ENCODE measurements at regions of chr11 and their contacts with region 1.

Region 1: GRCh38 chr11:115504276-115505158 is at the start of gene CADM1:
- DNase-seq: peak; percentile 96
- H3K4me3 ChIP-seq: peak within 1 kb of the TSS; percentile 84 to 95
- H3K27ac ChIP-seq: peak within 1 kb of the TSS; percentile 48 to 98; a peak in 3 of 4 replicates
- H3K4me1 ChIP-seq: peaks cover 3 to 22% of the 10 kb centered on the region in 2 experiments; a peak in 2 of 4 replicates
- H3K27me3 ChIP-seq: peaks cover 12% of the 10 kb centered on the region; the same call in 1 of the 2 replicates
- CTCF ChIP-seq: peak; percentile 56
- EP300 ChIP-seq: no peak
- RAD21 ChIP-seq: peak; percentile 57
- polyA plus RNA-seq, gene CADM1: 7.9 and 11.4 TPM in 2 replicates

Region 2: GRCh38 chr11:115324581-115325432 is 179.7 kb before region 1 on chr11:
- CTCF ChIA-PET with region 1: interaction called, 28 read pairs
- POLR2A ChIA-PET with region 1: interaction called, 3 read pairs
- DNase-seq: peak; percentile 33
- H3K4me3 ChIP-seq: no peak overlapping the region; a peak in 1 of 4 replicates
- H3K27ac ChIP-seq: peak overlapping the region in 1 of 2 experiments; percentile 39; a peak in 1 of 4 replicates
- H3K4me1 ChIP-seq: peaks cover 0 to 14% of the 10 kb centered on the region in 2 experiments; a peak in 2 of 4 replicates
- H3K27me3 ChIP-seq: no peaks in the 10 kb centered on the region
- CTCF ChIP-seq: peak; percentile 82
- EP300 ChIP-seq: no peak
- RAD21 ChIP-seq: peak; percentile 90

Region 3: GRCh38 chr11:115334932-115335788 is 169.4 kb before region 1 on chr11:
- CTCF ChIA-PET with region 1: interaction called, 16 read pairs
- POLR2A ChIA-PET with region 1: interaction called, 5 read pairs
- DNase-seq: peak; percentile 21
- H3K4me3 ChIP-seq: no peak overlapping the region
- H3K27ac ChIP-seq: no peak overlapping the region
- H3K4me1 ChIP-seq: peaks cover 0 to 6% of the 10 kb centered on the region in 2 experiments; a peak in 2 of 4 replicates
- H3K27me3 ChIP-seq: no peaks in the 10 kb centered on the region
- CTCF ChIP-seq: peak; percentile 85
- EP300 ChIP-seq: no peak
- RAD21 ChIP-seq: peak; percentile 83

Region 4: DNA sequence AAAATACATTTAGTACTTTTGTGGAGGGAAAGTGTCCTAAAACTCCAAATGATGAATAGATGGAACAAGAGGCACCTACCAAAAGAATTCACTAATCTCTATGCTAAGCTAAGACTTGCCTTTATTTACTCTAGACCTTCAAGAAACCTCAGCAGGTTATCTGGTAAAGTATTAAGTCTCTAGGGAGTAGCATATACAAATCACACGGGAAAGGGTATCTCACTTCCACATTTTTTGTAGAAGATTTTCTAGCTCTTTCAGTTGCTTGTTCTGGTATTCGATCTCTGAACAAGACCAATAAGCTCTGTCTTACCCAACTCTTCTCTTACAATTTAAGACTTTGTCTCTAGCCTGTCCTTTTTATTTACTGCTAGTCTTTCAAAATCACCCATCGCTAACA is 17.8 kb after region 1 on chr11:
- CTCF ChIA-PET with region 1: interaction called, 10 read pairs
- POLR2A ChIA-PET with region 1: no interaction called
- DNase-seq: no peak
- H3K4me3 ChIP-seq: no peak overlapping the region
- H3K27ac ChIP-seq: no peak overlapping the region
- H3K4me1 ChIP-seq: peaks cover 0 to 4% of the 10 kb centered on the region in 2 experiments; a peak in 1 of 4 replicates
- H3K27me3 ChIP-seq: no peaks in the 10 kb centered on the region; the same call in 1 of the 2 replicates
- CTCF ChIP-seq: no peak
- EP300 ChIP-seq: no peak
- RAD21 ChIP-seq: no peak

Region 5: DNA sequence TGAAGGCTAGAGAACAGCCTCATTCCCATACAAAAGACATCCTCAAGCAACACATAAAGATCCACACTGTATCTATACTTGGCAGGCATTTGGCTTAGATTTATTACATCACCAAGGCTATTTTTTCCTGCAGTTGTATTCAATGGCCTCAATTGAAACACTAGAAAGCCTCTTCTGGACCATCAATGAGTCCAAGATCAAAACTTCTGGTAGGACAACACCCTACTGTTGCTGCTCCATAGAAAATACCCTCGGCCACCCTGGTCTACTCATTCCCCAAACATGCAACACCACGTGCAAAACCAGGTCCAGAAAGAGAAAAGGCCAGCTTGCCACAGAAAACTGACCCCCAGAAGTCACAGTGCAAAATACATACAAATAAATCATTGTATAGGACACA is 56.6 kb after region 1 on chr11:
- CTCF ChIA-PET with region 1: no interaction called
- POLR2A ChIA-PET with region 1: no interaction called
- DNase-seq: no peak
- H3K4me3 ChIP-seq: no peak overlapping the region
- H3K27ac ChIP-seq: no peak overlapping the region
- H3K4me1 ChIP-seq: peaks cover 0 to 10% of the 10 kb centered on the region in 2 experiments; a peak in 1 of 4 replicates
- H3K27me3 ChIP-seq: no peaks in the 10 kb centered on the region
- CTCF ChIP-seq: no peak
- EP300 ChIP-seq: no peak
- RAD21 ChIP-seq: no peak

Region 6: DNA sequence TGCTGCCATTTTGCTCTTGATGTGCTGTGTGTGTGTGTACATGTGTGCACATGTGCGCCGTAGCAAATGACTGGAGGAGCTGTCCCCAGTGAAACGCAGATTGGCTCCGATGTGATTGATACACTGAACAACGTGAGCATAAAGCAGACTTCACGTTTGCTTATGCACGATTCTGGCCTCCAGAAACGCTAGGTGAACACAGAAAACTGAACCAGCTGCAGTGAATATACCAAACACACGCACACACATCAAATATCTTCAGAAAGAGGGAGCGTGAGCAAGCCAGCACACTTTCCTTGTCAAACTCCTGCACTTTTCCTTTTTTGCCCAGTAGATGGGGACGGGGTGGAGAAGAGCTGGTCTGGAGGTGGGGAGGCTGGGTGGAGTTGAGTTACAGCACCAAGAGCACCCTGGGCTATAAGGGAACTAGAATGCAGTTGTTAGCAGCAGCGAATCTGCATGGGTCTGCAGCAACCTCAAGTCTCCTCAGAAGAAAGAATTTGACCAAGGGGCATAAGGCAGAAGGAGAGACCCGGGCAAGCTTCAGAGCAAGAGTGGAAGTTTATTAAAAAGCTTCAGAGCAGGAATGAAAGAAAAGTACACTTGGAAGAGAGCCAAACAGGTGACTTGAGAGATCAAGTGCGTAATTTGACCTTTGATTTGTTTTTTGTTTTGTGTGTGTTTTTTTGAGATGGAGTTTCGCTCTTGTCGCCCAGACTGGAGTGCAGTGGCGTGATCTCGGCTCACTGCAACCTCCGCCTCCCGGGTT is 77.5 kb after region 1 on chr11:
- CTCF ChIA-PET with region 1: no interaction called
- POLR2A ChIA-PET with region 1: interaction called, 10 read pairs
- DNase-seq: peak; percentile 58
- H3K4me3 ChIP-seq: no peak overlapping the region
- H3K27ac ChIP-seq: peak overlapping the region in 1 of 2 experiments; percentile 100; a peak in 2 of 4 replicates
- H3K4me1 ChIP-seq: peaks cover 0 to 50% of the 10 kb centered on the region in 2 experiments; a peak in 2 of 4 replicates
- H3K27me3 ChIP-seq: no peaks in the 10 kb centered on the region
- CTCF ChIP-seq: 0 out of 2 replicates have a peak, but pooled peaks have one; percentile 11
- EP300 ChIP-seq: peak in 1 of 2 experiments; percentile 34; a peak in 1 of 4 replicates
- RAD21 ChIP-seq: peak; percentile 67